Sigmoid colon (tissue), 7 donors: ENCODE measurements at regions of chr22 and their contacts with region 1.

Region 1: DNA sequence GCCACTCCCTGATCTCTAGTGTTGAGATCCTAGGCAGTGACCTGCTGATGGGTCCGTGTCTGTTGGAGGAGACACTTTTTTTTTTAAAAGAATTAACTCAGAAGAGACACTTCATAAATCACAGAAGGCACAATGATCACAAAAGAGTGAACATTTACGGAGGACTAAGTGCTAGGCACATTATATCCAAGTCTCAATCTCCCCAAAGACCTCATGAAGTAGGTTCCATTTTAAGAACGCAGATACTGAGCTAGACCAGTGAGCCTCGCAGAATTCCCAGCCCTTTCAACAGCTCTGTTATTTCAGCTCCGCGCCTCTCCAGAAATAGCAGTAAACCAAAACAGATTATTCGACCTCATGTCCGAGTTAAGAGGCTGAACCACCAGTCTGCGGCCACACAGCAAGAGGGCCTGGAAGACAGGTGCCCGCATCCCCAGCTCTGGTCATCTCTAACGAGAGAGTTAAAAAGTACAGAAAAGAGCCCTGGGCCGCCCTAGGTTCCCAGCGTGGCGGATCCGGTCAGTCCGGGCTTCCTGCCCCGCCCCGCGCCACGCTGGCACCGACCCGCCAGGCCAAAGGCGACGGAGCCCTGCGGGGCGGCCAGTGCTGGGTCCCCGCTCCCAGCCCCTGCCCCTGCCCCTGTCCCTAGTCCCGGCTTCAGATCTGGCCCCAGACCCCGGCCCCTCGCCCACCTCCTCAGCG is 612 bp downstream of the XBP1 start:
- DNase-seq: peak; percentile 85
- H3K4me3 ChIP-seq: peak overlapping the region; percentile 74 to 100 (median 87)
- H3K27ac ChIP-seq: peak overlapping the region; percentile 96 to 100 (median 100)
- H3K4me1 ChIP-seq: peaks cover 0 to 63% (median 49%) of the 10 kb centered on the region in 4 donors
- H3K27me3 ChIP-seq: no peaks in the 10 kb centered on the region
- CTCF ChIP-seq: no peak
- EP300 ChIP-seq: no peak
- POLR2A ChIP-seq: no peak

Region 2: GRCh38 chr22:28620244-28620922 is 179.4 kb before region 1 on chr22:
- intact Hi-C with region 1: no loop called
- DNase-seq: peak; percentile 62
- H3K4me3 ChIP-seq: no peak overlapping the region
- H3K27ac ChIP-seq: peak overlapping the region in 3 of 4 donors; percentile 19 to 27 (median 26)
- H3K4me1 ChIP-seq: no peaks in the 10 kb centered on the region
- H3K27me3 ChIP-seq: no peaks in the 10 kb centered on the region
- CTCF ChIP-seq: no peak
- EP300 ChIP-seq: no peak
- POLR2A ChIP-seq: no peak

Region 3: DNA sequence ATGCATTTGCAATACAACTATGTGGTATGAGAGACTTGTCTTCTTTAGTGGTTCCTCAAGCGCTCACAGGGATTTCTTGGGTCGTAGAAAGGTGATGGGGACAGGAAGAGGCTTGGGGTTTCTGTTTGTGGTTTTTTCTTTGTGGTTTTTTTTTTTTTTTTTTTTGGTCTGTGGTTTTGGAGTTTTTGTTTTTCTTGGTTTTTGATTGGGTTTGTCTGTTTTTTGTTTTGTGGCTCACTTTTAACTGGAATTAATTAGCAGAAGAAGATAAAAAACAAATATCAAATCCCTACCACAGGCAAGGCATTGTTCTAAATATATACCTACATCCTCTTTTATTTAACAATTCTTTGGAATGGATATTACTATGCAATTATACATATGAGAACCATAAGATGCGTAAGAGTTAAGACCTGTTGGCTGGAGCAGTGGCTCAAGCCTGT is 125.6 kb before region 1 on chr22:
- intact Hi-C with region 1: loop called (anchors 1 kb)
- DNase-seq: no peak
- H3K4me3 ChIP-seq: no peak overlapping the region
- H3K27ac ChIP-seq: no peak overlapping the region
- H3K4me1 ChIP-seq: peaks cover 0 to 9% (median 4%) of the 10 kb centered on the region in 4 donors
- H3K27me3 ChIP-seq: no peaks in the 10 kb centered on the region
- CTCF ChIP-seq: no peak
- EP300 ChIP-seq: no peak
- POLR2A ChIP-seq: no peak

Region 4: GRCh38 chr22:28736296-28737155 is 63.2 kb before region 1 on chr22:
- intact Hi-C with region 1: no loop called
- DNase-seq: no peak
- H3K4me3 ChIP-seq: no peak overlapping the region
- H3K27ac ChIP-seq: no peak overlapping the region
- H3K4me1 ChIP-seq: peaks cover 0 to 6% (median 3%) of the 10 kb centered on the region in 4 donors
- H3K27me3 ChIP-seq: no peaks in the 10 kb centered on the region
- CTCF ChIP-seq: no peak
- EP300 ChIP-seq: no peak
- POLR2A ChIP-seq: no peak

Region 5: DNA sequence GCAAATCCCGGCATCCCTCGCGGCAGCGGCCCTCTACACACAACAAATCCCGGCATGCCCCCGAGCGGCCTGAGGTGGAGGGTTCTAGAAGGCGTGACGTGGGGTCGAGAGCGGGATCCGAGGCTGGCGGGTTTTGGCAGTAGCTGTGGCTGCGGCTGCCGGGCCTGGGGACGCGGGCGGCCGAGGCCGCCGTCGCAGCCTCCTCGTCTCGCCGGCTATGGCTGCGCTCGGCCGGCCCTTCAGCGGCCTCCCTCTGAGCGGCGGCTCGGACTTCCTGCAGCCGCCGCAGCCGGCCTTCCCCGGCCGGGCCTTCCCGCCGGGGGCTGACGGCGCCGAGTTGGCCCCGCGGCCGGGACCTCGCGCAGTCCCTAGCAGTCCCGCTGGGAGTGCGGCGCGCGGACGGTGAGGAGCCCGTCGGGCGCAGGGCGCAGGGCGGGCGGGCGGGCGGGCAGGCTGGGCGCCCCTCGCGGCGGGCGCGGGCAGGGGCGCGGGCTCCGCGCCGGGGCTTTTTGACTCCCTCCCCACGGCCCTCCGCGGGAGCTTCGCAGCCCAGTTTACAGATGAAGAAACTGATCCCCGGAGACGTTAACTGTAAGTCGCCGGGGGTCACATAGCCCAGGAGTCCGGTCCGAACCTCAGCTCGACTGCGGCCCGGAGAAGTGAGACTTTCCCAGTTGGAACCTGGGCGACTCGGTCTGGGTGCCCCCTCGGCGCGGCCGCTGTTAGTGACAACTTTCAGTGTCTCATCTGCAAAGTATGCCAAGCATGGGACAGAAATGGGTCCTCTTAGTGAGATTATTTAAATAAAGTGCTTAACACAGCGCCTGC is 26.9 kb before region 1 on chr22 and contains the start of gene CCDC117:
- intact Hi-C with region 1: loop called (anchors 1 kb)
- DNase-seq: peak; percentile 97
- H3K4me3 ChIP-seq: peak within 1 kb of the TSS; percentile 63 to 99 (median 95)
- H3K27ac ChIP-seq: peak within 1 kb of the TSS; percentile 97 to 100 (median 100)
- H3K4me1 ChIP-seq: peaks cover 0 to 36% (median 25%) of the 10 kb centered on the region in 4 donors
- H3K27me3 ChIP-seq: no peaks in the 10 kb centered on the region
- CTCF ChIP-seq: no peak
- EP300 ChIP-seq: peak in 1 of 4 donors; percentile 51
- POLR2A ChIP-seq: peak in 1 of 2 donors; percentile 54
- total RNA-seq, gene CCDC117: 23.9 to 33.2 (median 29.8) TPM